Activated CD8-positive, alpha-beta T cell treated with anti-CD3 and anti-CD28 coated beads, Interleukin-2, amount 10 ng/mL, durations not matched to agents 7 days and 5 days (primary cell): ENCODE measurements at regions of chr12 and their contacts with region 1.

Region 1: DNA sequence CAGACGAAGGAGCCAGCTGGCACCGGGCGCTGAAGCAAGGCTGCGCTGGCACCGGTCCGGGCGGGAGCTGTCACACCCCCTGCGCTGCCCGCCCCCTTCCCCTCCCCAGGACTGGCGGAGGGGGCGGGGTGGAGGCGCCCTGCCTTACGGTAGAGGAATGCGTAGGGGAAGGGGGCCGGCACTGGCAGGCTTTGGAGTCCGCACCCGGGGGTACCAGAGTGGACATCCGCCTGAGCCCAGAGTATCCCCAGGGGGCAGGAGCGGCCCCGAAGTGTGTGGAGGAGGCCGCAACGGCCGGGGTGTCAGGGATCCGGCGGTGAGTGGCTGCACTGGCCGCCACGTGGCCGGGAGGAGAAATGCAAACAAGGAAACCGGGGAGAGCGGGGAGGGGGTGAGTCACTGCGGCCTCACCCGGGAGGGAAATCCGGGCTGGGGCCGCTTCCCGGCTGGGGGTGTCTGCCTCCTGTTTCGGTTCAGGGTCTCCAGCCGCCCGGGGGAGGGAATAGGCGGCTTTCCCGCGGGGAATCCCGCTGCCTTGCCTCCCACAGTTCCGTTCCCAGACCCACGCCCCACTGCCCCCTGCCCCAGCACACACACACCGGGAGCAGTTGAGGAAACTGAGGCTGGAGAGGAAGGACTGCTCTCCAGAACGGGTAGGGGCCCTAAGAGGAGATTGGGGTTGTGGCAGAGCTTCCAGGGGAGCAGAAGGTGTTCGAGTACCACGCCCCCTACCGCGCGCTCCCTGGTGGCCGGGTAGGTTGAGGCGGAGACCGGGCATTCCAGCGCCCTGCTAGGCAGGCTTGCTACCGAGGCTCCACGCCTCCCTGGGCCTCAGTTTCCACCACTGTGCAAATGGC is at the start of gene RAPGEF3:
- DNase-seq: peak; percentile 64
- ATAC-seq: peak; percentile 86
- H3K4me3 Mint-ChIP-seq: peak within 1 kb of the TSS; percentile 67
- H3K27ac Mint-ChIP-seq: no peak within 1 kb of the TSS
- H3K4me1 Mint-ChIP-seq: peaks cover 38% of the 10 kb centered on the region
- H3K27me3 Mint-ChIP-seq: peaks cover 4% of the 10 kb centered on the region
- total RNA-seq, gene RAPGEF3: 0.24 TPM in 1 of 2 experiments, not detected in the other

Region 2: GRCh38 chr12:47705566-47706425 is 53.3 kb before region 1 on chr12 and contains the start of gene RPAP3:
- CTCF ChIA-PET with region 1: interaction called, 11 read pairs
- POLR2A ChIA-PET with region 1: no interaction called
- DNase-seq: peak; percentile 98
- ATAC-seq: peak; percentile 96
- H3K4me3 Mint-ChIP-seq: peak within 1 kb of the TSS; percentile 92
- H3K27ac Mint-ChIP-seq: peak within 1 kb of the TSS; percentile 97
- H3K4me1 Mint-ChIP-seq: peaks cover 57% of the 10 kb centered on the region
- H3K27me3 Mint-ChIP-seq: no peaks in the 10 kb centered on the region
- total RNA-seq, gene RPAP3: 41.6 to 41.7 TPM

Region 3: DNA sequence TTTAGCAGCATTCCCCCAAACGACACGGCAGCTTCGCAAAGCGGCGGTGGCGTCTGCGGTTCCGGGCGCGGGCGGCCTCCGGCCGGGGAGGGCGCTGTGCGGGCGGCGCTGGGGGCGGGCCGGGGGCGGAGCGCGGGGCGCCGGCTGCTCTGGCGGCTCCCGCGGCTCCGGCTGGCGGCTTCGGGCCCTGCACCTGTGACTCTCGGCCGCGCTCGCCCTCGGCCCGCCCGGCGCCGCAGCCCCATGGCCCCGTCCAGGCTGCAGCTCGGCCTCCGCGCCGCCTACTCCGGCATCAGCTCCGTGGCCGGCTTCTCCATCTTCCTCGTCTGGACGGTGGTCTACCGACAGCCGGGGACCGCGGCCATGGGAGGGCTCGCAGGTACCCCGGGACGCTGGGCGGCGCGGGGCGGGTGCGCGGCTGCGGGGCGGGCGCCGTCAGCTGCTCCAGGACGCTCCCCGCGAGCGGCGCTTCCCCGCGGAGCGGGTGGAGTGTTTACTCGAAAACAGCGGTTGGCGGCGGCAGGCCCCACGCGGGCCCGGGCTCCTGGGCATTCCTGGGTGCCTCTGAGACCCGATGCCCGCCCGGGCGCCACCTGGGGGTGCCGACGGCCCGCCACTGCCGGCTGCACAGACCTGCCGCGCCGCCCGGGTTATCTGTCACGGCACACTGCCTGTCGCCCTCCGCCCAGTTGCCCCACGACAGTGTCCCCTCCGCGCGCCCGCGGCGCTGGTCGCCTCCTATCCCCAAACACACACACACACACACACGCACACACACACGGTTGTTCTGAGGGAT is 14.2 kb after region 1 on chr12 and contains the start of gene SLC48A1:
- CTCF ChIA-PET with region 1: interaction called, 189 read pairs
- POLR2A ChIA-PET with region 1: interaction called, 3 read pairs
- DNase-seq: peak; percentile 73
- ATAC-seq: peak; percentile 88
- H3K4me3 Mint-ChIP-seq: peak within 1 kb of the TSS; percentile 87
- H3K27ac Mint-ChIP-seq: peak within 1 kb of the TSS; percentile 66
- H3K4me1 Mint-ChIP-seq: peaks cover 40% of the 10 kb centered on the region
- H3K27me3 Mint-ChIP-seq: peaks cover 7% of the 10 kb centered on the region
- total RNA-seq, gene SLC48A1: 7.0 to 8.1 TPM

Region 4: GRCh38 chr12:47779301-47779942 is 20.4 kb after region 1 on chr12:
- CTCF ChIA-PET with region 1: interaction called, 189 read pairs
- POLR2A ChIA-PET with region 1: interaction called, 5 read pairs
- DNase-seq: peak; percentile 94
- ATAC-seq: peak; percentile 91
- H3K4me3 Mint-ChIP-seq: no peak overlapping the region
- H3K27ac Mint-ChIP-seq: peak overlapping the region; percentile 47
- H3K4me1 Mint-ChIP-seq: peaks cover 44% of the 10 kb centered on the region
- H3K27me3 Mint-ChIP-seq: no peaks in the 10 kb centered on the region

Region 5: GRCh38 chr12:47797441-47797840 is 38.4 kb after region 1 on chr12:
- CTCF ChIA-PET with region 1: no interaction called
- POLR2A ChIA-PET with region 1: no interaction called
- DNase-seq: peak; percentile 57
- ATAC-seq: peak; percentile 73
- H3K4me3 Mint-ChIP-seq: no peak overlapping the region
- H3K27ac Mint-ChIP-seq: peak overlapping the region; percentile 83
- H3K4me1 Mint-ChIP-seq: peaks cover 47% of the 10 kb centered on the region
- H3K27me3 Mint-ChIP-seq: no peaks in the 10 kb centered on the region